HepG2 (cell line): ENCODE measurements at regions of chr6 and their contacts with region 1.

Region 1: GRCh38 chr6:42726485-42727086 is 4.2 kb upstream of the PRPH2 start:
- DNase-seq: peak; percentile 84
- ATAC-seq: peak; percentile 82
- H3K4me3 ChIP-seq: no peak overlapping the region
- H3K27ac ChIP-seq: no peak overlapping the region
- H3K4me1 ChIP-seq: peaks cover 20% of the 10 kb centered on the region
- H3K27me3 ChIP-seq: no peaks in the 10 kb centered on the region
- CTCF ChIP-seq: peak; percentile 94
- EP300 ChIP-seq: no peak
- POLR2A ChIP-seq: no peak
- RAD21 ChIP-seq: peak; percentile 90; the same call in 1 of the 2 replicates

Region 2: GRCh38 chr6:42482174-42482573 is 244.4 kb before region 1 on chr6:
- CTCF ChIA-PET with region 1: no interaction called
- POLR2A ChIA-PET with region 1: no interaction called
- in situ Hi-C with region 1: no loop called
- intact Hi-C with region 1: no loop called
- DNase-seq: no peak
- ATAC-seq: no peak
- H3K4me3 ChIP-seq: no peak overlapping the region
- H3K27ac ChIP-seq: no peak overlapping the region
- H3K4me1 ChIP-seq: no peaks in the 10 kb centered on the region
- H3K27me3 ChIP-seq: peaks cover 1 to 5% of the 10 kb centered on the region in 2 experiments; a peak in 2 of 5 replicates
- CTCF ChIP-seq: no peak
- EP300 ChIP-seq: no peak
- POLR2A ChIP-seq: no peak
- RAD21 ChIP-seq: no peak

Region 3: DNA sequence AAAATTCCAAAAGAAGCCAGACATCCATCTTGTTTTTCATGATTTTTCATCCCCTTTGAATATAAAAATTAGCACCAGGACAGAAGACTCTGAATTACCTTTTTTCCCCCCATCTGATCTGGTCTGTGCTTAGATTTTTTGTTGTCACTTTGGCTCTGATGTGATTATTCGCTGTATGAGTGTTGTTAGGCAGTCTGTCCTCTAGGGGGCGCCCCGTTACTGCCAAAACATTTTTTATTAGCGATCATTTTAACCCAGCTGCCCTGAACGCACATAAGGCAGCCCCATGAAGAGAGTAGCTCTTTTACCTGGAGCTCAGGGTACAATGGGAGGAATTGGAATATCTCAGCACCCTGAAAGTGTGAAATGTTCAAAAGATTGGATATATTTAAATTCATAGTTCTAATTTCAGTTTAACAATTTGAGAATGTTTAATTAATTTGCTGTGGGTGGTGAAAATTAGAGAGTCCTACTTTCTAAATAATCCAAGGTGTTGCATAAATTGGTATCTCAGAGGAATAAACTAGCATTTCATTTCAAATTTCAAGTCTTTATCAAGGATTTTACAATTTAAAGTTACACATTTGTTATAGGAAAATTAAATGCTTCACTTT is 64.9 kb before region 1 on chr6:
- CTCF ChIA-PET with region 1: interaction called, 29 read pairs
- POLR2A ChIA-PET with region 1: interaction called, 4 read pairs
- in situ Hi-C with region 1: loop called (anchors 5 kb)
- intact Hi-C with region 1: loop called (anchors 1 kb)
- DNase-seq: peak; percentile 78
- ATAC-seq: peak; percentile 83
- H3K4me3 ChIP-seq: no peak overlapping the region
- H3K27ac ChIP-seq: no peak overlapping the region
- H3K4me1 ChIP-seq: no peaks in the 10 kb centered on the region
- H3K27me3 ChIP-seq: no peaks in the 10 kb centered on the region
- CTCF ChIP-seq: peak; percentile 88
- EP300 ChIP-seq: no peak
- POLR2A ChIP-seq: no peak
- RAD21 ChIP-seq: peak; percentile 86

Region 4: DNA sequence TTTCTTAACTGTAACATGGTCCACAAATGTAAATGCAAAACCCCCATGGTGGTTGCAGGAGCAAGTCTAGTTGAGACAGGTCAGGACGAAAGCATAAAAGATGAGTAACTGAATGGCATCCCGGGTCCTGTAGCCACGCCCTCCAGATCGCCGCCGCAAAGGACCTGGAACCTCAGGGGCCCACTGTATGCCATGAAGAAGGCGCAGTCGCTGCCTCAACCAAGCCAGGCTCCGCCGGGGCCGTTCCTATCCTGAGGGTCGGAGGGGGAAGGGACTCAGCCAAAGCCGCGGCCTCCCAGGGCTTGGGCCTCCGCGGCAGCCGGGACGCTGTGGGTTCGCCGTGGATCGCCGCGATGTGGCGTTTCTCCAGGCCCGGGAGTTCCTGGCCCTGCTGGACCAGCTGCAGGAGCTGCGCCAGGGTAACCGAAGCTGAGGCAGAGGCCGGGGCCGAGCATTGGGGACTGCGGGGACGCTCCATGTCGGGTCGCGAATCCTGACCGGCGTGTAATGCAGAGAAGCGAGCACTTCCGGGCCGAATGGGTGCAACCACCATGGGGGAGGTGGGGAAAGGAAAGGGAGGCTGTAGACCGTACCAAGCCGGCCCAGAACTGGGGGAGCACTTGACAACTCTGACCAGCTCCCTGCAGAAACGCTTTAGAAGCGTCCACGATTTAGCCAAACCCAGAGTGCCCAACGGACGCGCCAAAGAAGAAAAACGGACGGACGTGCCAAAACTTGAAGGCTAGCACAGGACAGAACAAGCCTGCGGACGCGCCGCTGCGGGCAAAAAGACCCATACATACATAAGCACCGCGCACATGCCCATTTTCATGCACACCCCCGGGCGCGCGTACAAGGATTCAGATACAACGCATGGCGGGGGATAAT is 164.0 kb after region 1 on chr6:
- CTCF ChIA-PET with region 1: no interaction called
- POLR2A ChIA-PET with region 1: interaction called, 7 read pairs
- in situ Hi-C with region 1: no loop called
- intact Hi-C with region 1: loop called (anchors 5 kb)
- DNase-seq: peak; percentile 95
- ATAC-seq: peak; percentile 91
- H3K4me3 ChIP-seq: peak overlapping the region; percentile 75 to 95 (median 86)
- H3K27ac ChIP-seq: peak overlapping the region; percentile 94
- H3K4me1 ChIP-seq: peaks cover 46% of the 10 kb centered on the region
- H3K27me3 ChIP-seq: no peaks in the 10 kb centered on the region
- CTCF ChIP-seq: 0 out of 2 replicates have a peak, but pooled peaks have one; percentile 36
- EP300 ChIP-seq: no peak
- POLR2A ChIP-seq: peak; percentile 92 to 95
- RAD21 ChIP-seq: peak; percentile 78